Caco-2 (cell line): ENCODE measurements at regions of chr1 and their contacts with region 1.

Region 1: DNA sequence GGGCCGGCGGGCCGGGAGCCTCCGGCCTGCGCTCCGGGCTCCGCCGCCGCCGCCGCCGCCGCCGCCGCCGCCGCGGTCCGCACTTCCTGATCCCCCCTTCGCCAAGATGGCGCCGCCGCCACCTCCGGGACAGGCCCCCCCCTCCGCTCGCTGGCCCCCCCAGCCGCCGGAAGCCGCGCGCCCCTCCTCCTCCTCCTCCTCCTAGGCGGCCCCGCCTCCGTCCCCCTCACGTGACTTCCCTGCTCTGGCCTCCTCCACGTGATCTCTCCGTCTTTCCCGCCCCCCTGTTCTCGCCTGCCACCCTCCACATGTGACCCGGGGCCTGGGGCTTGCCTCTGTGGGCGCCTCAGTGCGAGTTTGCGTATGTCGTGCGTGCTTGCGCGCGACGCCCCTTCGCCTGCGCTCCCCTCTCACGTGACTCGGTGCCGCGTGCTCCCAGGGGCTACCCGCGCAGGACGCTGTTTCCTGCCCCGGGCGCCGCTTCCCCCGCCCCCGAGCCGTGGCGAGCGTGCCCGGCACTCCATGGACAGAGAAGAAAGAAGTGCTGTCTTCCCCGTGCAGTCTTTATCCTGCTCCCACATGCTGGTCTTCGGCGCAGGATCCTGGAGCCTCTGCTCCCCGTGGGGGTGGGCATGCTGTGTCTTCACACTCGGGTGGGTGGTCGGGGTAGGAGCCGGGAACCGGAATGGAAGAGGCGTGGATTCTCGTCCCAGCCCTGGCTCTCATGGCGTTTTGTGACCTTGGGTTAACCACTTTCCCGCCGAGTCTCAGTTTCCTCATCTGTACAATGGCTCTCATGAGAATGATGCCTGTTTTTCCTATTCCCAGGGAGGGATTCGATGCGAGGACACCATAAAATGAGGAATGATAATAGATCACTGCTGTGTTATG is at the start of gene UBE2Q1:
- DNase-seq: peak; percentile 98 to 99
- H3K4me3 ChIP-seq: peak within 1 kb of the TSS; percentile 85
- H3K4me3 Mint-ChIP-seq: peak within 1 kb of the TSS; percentile 90
- H3K27ac Mint-ChIP-seq: peak within 1 kb of the TSS; percentile 91
- H3K4me1 ChIP-seq: peaks cover 13% of the 10 kb centered on the region
- H3K4me1 Mint-ChIP-seq: peaks cover 13% of the 10 kb centered on the region
- H3K27me3 ChIP-seq: no peaks in the 10 kb centered on the region
- H3K27me3 Mint-ChIP-seq: no peaks in the 10 kb centered on the region
- CTCF ChIP-seq: no peak
- total RNA-seq, gene UBE2Q1: 92.2 and 93.2 TPM in 2 replicates

Region 2: GRCh38 chr1:154520333-154520732 is 38.5 kb before region 1 on chr1:
- CTCF ChIA-PET with region 1: no interaction called
- POLR2A ChIA-PET with region 1: no interaction called
- intact Hi-C with region 1: no loop called
- DNase-seq: no peak
- H3K4me3 ChIP-seq: no peak overlapping the region
- H3K4me3 Mint-ChIP-seq: no peak overlapping the region
- H3K27ac Mint-ChIP-seq: no peak overlapping the region
- H3K4me1 ChIP-seq: no peaks in the 10 kb centered on the region
- H3K4me1 Mint-ChIP-seq: no peaks in the 10 kb centered on the region
- H3K27me3 ChIP-seq: peaks cover 2% of the 10 kb centered on the region; the same call in 1 of the 2 replicates
- H3K27me3 Mint-ChIP-seq: peaks cover 10% of the 10 kb centered on the region
- CTCF ChIP-seq: no peak

Region 3: GRCh38 chr1:154583773-154584172 is 25.0 kb after region 1 on chr1:
- CTCF ChIA-PET with region 1: no interaction called
- POLR2A ChIA-PET with region 1: no interaction called
- intact Hi-C with region 1: no loop called
- DNase-seq: no peak
- H3K4me3 ChIP-seq: no peak overlapping the region
- H3K4me3 Mint-ChIP-seq: no peak overlapping the region
- H3K27ac Mint-ChIP-seq: no peak overlapping the region
- H3K4me1 ChIP-seq: no peaks in the 10 kb centered on the region
- H3K4me1 Mint-ChIP-seq: no peaks in the 10 kb centered on the region
- H3K27me3 ChIP-seq: no peaks in the 10 kb centered on the region
- H3K27me3 Mint-ChIP-seq: no peaks in the 10 kb centered on the region
- CTCF ChIP-seq: no peak

Region 4: GRCh38 chr1:154607609-154608396 is 49.0 kb after region 1 on chr1 and contains the start of gene ADAR:
- CTCF ChIA-PET with region 1: interaction called, 3 read pairs
- POLR2A ChIA-PET with region 1: no interaction called
- intact Hi-C with region 1: loop called (anchors 1 kb)
- DNase-seq: peak; percentile 91 to 95
- H3K4me3 ChIP-seq: peak within 1 kb of the TSS; percentile 54
- H3K4me3 Mint-ChIP-seq: peak within 1 kb of the TSS; percentile 88
- H3K27ac Mint-ChIP-seq: peak within 1 kb of the TSS; percentile 89
- H3K4me1 ChIP-seq: peaks cover 7% of the 10 kb centered on the region
- H3K4me1 Mint-ChIP-seq: peaks cover 30% of the 10 kb centered on the region
- H3K27me3 ChIP-seq: no peaks in the 10 kb centered on the region
- H3K27me3 Mint-ChIP-seq: no peaks in the 10 kb centered on the region
- CTCF ChIP-seq: no peak
- total RNA-seq, gene ADAR: 178 and 190 TPM in 2 replicates

Region 5: DNA sequence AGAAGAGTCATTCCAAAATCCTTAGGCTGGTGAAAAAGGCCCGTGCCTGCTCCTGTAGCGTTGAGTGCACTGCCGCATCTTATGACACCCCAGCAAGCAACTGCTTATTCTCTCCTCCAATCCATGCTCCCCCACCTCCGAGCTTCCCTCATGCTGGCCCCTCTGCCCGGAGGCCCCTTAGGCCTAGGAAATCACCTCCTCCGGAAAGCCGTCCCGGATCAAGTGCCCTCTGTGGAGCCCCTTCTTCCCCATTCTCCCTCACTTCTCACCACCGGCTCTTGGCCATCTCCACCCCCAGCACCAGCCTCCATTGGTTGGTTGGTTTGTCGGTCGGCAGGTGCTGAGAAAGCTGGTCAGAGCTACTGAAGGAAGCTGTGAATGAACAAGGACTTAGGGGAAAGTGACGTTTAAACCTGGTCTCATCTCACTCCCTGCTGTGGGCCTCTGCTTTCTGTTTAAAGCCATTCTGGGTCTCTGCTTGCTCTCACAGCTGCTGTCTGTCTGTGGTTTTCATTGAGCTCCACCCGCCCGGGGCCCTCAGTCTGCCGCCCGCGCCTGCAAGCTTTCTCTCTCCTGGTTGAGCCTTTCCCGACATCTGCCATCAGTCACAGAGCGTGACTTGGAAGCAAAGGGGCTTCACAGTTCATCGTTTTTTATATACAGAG is 189.1 kb after region 1 on chr1:
- CTCF ChIA-PET with region 1: no interaction called
- POLR2A ChIA-PET with region 1: no interaction called
- intact Hi-C with region 1: loop called (anchors 1 kb)
- DNase-seq: no peak
- H3K4me3 ChIP-seq: no peak overlapping the region
- H3K4me3 Mint-ChIP-seq: no peak overlapping the region
- H3K27ac Mint-ChIP-seq: no peak overlapping the region
- H3K4me1 ChIP-seq: no peaks in the 10 kb centered on the region
- H3K4me1 Mint-ChIP-seq: no peaks in the 10 kb centered on the region
- H3K27me3 ChIP-seq: peaks cover 3% of the 10 kb centered on the region
- H3K27me3 Mint-ChIP-seq: peaks cover 38% of the 10 kb centered on the region
- CTCF ChIP-seq: no peak

Region 6: DNA sequence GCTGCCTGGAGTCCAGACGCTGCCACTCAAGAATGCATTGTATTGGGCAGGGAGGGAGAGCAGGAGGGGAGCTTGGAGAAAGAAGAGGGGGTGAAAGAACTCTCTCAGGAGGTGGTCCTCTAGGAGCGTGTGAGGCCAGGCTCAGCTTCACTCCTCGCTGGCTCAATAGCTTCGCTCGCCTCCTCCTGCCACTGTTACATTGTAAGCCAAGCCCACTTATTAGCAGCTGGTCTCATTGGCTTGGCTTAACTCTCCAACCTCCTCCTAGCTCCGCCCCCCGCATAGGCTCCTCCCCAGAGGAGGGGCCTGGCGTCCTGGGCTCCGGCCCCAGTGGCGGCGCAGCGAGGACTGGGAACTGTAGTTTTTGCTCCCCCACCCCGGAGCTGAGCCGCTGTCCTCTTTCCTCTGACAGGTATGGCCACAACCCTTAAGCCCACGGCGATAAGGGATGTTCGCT is 311.3 kb after region 1 on chr1 and contains the start of gene KCNN3:
- CTCF ChIA-PET with region 1: no interaction called
- POLR2A ChIA-PET with region 1: no interaction called
- intact Hi-C with region 1: loop called (anchors 2 kb)
- DNase-seq: peak; percentile 92 to 94
- H3K4me3 ChIP-seq: no peak within 1 kb of the TSS; the same call in 1 of the 2 replicates
- H3K4me3 Mint-ChIP-seq: peak within 1 kb of the TSS; percentile 41
- H3K27ac Mint-ChIP-seq: no peak within 1 kb of the TSS
- H3K4me1 ChIP-seq: no peaks in the 10 kb centered on the region
- H3K4me1 Mint-ChIP-seq: peaks cover 7% of the 10 kb centered on the region
- H3K27me3 ChIP-seq: peaks cover 2% of the 10 kb centered on the region; the same call in 1 of the 2 replicates
- H3K27me3 Mint-ChIP-seq: peaks cover 19% of the 10 kb centered on the region
- CTCF ChIP-seq: no peak
- total RNA-seq, gene KCNN3: 0.05 TPM in 1 of 2 replicates, not detected in the other

Region 7: GRCh38 chr1:154936555-154937084 is 377.8 kb after region 1 on chr1 and contains the start of gene PMVK:
- CTCF ChIA-PET with region 1: interaction called, 12 read pairs
- POLR2A ChIA-PET with region 1: interaction called, 3 read pairs
- intact Hi-C with region 1: no loop called
- DNase-seq: peak; percentile 97 to 98
- H3K4me3 ChIP-seq: peak within 1 kb of the TSS; percentile 72
- H3K4me3 Mint-ChIP-seq: peak within 1 kb of the TSS; percentile 87
- H3K27ac Mint-ChIP-seq: peak within 1 kb of the TSS; percentile 99
- H3K4me1 ChIP-seq: peaks cover 6% of the 10 kb centered on the region
- H3K4me1 Mint-ChIP-seq: peaks cover 17% of the 10 kb centered on the region
- H3K27me3 ChIP-seq: no peaks in the 10 kb centered on the region
- H3K27me3 Mint-ChIP-seq: no peaks in the 10 kb centered on the region
- CTCF ChIP-seq: peak in 1 of 2 experiments; percentile 62
- total RNA-seq, gene PMVK: 25.1 and 25.2 TPM in 2 replicates